Lower leg skin (tissue), 4 donors: ENCODE measurements at regions of chr1 and their contacts with region 1.

Region 1: DNA sequence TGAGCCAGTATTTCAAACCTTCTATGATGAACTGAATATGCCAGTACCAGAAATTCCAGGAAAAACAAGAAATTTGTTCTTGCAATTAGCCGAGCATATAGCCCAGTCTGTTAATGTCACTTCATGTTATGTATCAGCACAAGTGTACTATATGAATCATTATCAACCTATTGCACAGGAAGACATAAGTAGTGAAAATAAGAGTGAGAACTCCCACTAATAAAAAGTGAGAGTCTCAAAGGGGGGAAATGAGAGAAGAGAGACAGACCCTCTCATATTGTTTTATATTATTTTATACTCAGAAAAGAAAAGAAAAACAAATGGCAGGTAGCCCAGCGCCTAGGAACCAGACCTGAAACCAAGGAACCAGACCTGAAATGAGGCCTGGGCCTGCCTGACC is 16.2 kb downstream of the JMJD4 start:
- DNase-seq: no peak
- H3K4me3 ChIP-seq: no peak overlapping the region
- CTCF ChIP-seq: no peak
- POLR2A ChIP-seq: no peak

Region 2: GRCh38 chr1:227362039-227362438 is 356.9 kb before region 1 on chr1:
- intact Hi-C with region 1: loop called (anchors 5 kb)
- DNase-seq: no peak
- H3K4me3 ChIP-seq: no peak overlapping the region
- CTCF ChIP-seq: no peak
- POLR2A ChIP-seq: no peak

Region 3: DNA sequence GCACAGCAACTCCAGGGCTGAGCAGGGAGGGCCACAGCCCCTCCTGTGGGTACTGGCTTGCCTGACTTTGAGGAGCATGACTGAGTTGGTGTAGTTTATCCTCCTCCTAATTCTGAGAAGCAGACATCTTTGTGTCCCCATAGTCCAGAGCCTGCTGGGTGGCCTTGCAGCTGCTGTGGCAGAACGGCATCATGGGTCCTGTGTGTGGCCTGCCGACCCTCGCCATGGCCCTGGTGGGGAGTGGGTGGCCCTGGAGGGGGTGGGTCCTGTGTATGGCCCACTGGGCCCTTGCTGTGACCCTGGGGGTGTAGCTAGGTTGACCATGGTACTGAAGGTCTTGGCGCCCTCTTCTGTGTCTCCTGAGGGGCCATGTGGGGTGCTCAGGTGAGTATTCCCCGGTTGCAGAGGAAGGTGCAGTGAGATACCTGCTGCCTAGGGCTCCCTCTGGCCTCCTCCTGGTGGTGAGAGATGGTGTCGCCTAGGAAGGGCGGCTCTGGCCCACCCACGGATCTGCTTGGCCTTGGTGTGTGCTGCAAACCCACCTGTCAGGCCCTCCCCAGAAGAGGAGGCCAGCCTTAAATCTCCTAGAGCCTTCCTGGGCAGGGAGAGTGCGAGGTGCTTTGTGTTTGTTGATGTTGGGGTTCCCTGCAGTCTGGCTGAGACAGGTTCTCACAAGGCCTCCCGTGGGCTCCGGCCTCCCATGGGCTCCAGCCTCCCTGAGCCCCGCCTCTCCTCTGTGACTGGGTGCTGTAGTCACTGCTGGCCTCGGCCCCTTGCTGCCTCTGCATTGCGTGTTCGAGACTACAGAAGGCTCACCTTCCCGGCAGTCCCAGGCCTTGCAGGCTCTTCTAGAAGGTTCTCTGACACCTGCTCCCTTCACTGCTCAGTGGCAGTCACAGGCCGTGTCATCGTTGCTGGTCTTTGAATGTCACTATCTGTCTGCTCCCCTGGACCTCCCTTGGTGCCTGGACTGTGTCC is 24.1 kb after region 1 on chr1:
- intact Hi-C with region 1: no loop called
- DNase-seq: no peak
- H3K4me3 ChIP-seq: no peak overlapping the region
- CTCF ChIP-seq: no peak
- POLR2A ChIP-seq: no peak

Region 4: DNA sequence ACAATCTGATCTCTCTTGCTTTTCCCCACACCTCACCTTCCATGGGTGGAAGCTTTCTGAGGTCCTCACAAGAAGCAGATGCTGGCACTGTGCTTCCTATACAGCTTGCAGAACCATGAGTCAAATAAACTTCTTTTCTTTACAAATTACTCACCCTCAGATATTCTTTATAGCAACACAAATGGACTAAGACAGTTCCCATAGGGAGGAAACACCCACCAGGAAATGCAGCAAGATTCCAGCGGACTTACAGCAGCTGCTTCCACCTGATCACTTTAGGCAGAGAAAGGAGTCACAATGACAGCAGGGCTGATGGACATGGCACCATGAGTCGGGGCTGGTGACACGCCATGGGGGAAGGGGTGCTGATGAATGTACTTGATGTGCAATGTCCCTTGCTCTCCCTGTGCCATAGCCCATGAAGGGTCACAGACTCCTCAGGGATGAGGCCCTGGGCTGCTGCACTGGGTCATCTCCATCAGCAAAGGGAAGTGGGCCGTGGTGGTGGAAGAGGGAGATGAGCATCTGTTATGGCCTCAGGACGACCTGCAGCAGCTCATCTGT is 150.4 kb after region 1 on chr1:
- intact Hi-C with region 1: no loop called
- DNase-seq: no peak
- H3K4me3 ChIP-seq: no peak overlapping the region
- CTCF ChIP-seq: no peak
- POLR2A ChIP-seq: no peak